IMR-90 (cell line): ENCODE measurements at regions of chr3 and their contacts with region 1.

Region 1: GRCh38 chr3:119293871-119294695 is at the start of gene ARHGAP31:
- DNase-seq: peak; percentile 81
- ATAC-seq: peak; percentile 80
- H3K4me3 ChIP-seq: peak within 1 kb of the TSS; percentile 94
- H3K27ac ChIP-seq: peak within 1 kb of the TSS; percentile 96
- H3K4me1 ChIP-seq: peaks cover 5% of the 10 kb centered on the region
- H3K27me3 ChIP-seq: no peaks in the 10 kb centered on the region
- CTCF ChIP-seq: no peak
- POLR2A ChIP-seq: peak; percentile 26; the same call in 1 of the 2 replicates
- RAD21 ChIP-seq: no peak
- total RNA-seq, gene ARHGAP31: 6.6 and 7.5 TPM in 2 replicates

Region 2: GRCh38 chr3:119098619-119099222 is 195.4 kb before region 1 on chr3:
- CTCF ChIA-PET with region 1: no interaction called
- POLR2A ChIA-PET with region 1: no interaction called
- dilution Hi-C with region 1: no loop called
- in situ Hi-C with region 1: no loop called
- intact Hi-C with region 1: no loop called
- DNase-seq: peak; percentile 40
- ATAC-seq: peak; percentile 42; the same call in 1 of the 2 replicates
- H3K4me3 ChIP-seq: no peak overlapping the region
- H3K27ac ChIP-seq: no peak overlapping the region
- H3K4me1 ChIP-seq: no peaks in the 10 kb centered on the region
- H3K27me3 ChIP-seq: no peaks in the 10 kb centered on the region
- CTCF ChIP-seq: peak; percentile 86
- POLR2A ChIP-seq: no peak
- RAD21 ChIP-seq: peak; percentile 80

Region 3: DNA sequence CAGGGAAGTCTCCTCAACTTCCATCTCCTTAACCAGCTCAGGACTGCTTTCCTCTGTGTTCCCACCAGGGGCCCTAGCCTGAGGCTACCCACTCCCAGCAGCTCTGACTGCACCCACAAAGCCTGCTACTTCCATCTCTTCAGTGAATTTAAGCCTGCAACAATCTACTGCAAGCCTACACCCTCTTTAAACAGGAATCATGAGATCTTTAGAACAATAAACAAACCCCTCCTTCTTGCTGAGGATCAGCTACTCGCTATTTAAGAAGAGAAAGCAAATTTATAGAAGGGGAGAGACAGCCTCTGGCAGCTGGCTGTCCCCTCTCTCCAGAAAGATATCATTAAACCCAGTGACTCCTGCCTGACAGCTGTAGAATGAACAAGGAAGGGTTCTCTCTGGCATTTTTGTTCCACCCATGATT is 52.0 kb after region 1 on chr3:
- CTCF ChIA-PET with region 1: interaction called, 4 read pairs
- POLR2A ChIA-PET with region 1: no interaction called
- dilution Hi-C with region 1: no loop called
- in situ Hi-C with region 1: loop called (anchors 5 kb)
- intact Hi-C with region 1: loop called (anchors 1 kb)
- DNase-seq: peak; percentile 75
- ATAC-seq: peak; percentile 90
- H3K4me3 ChIP-seq: no peak overlapping the region
- H3K27ac ChIP-seq: peak overlapping the region; percentile 89; the same call in 1 of the 2 replicates
- H3K4me1 ChIP-seq: peaks cover 18% of the 10 kb centered on the region
- H3K27me3 ChIP-seq: no peaks in the 10 kb centered on the region
- CTCF ChIP-seq: 0 out of 2 replicates have a peak, but pooled peaks have one; percentile 3
- POLR2A ChIP-seq: no peak
- RAD21 ChIP-seq: no peak

Region 4: GRCh38 chr3:119352849-119353502 is 58.9 kb after region 1 on chr3:
- CTCF ChIA-PET with region 1: interaction called, 4 read pairs
- POLR2A ChIA-PET with region 1: interaction called, 3 read pairs
- dilution Hi-C with region 1: no loop called
- in situ Hi-C with region 1: loop called (anchors 5 kb)
- intact Hi-C with region 1: loop called (anchors 1 kb)
- DNase-seq: peak; percentile 89
- ATAC-seq: peak; percentile 83
- H3K4me3 ChIP-seq: no peak overlapping the region
- H3K27ac ChIP-seq: peak overlapping the region; percentile 94
- H3K4me1 ChIP-seq: peaks cover 19% of the 10 kb centered on the region
- H3K27me3 ChIP-seq: no peaks in the 10 kb centered on the region
- CTCF ChIP-seq: peak; percentile 64
- POLR2A ChIP-seq: no peak
- RAD21 ChIP-seq: peak; percentile 74

Region 5: GRCh38 chr3:119388577-119388976 is 94.5 kb after region 1 on chr3:
- CTCF ChIA-PET with region 1: no interaction called
- POLR2A ChIA-PET with region 1: no interaction called
- dilution Hi-C with region 1: no loop called
- in situ Hi-C with region 1: no loop called
- intact Hi-C with region 1: no loop called
- DNase-seq: no peak
- ATAC-seq: no peak
- H3K4me3 ChIP-seq: no peak overlapping the region
- H3K27ac ChIP-seq: no peak overlapping the region
- H3K4me1 ChIP-seq: no peaks in the 10 kb centered on the region
- H3K27me3 ChIP-seq: no peaks in the 10 kb centered on the region
- CTCF ChIP-seq: no peak
- POLR2A ChIP-seq: no peak
- RAD21 ChIP-seq: no peak

Region 6: GRCh38 chr3:119437691-119438258 is 143.7 kb after region 1 on chr3:
- CTCF ChIA-PET with region 1: no interaction called
- POLR2A ChIA-PET with region 1: no interaction called
- dilution Hi-C with region 1: no loop called
- in situ Hi-C with region 1: no loop called
- intact Hi-C with region 1: loop called (anchors 10 kb)
- DNase-seq: no peak
- ATAC-seq: no peak
- H3K4me3 ChIP-seq: no peak overlapping the region
- H3K27ac ChIP-seq: no peak overlapping the region
- H3K4me1 ChIP-seq: 0 out of 2 replicates have a peak, but pooled peaks cover 2% of the 10 kb centered on the region
- H3K27me3 ChIP-seq: no peaks in the 10 kb centered on the region
- CTCF ChIP-seq: no peak
- POLR2A ChIP-seq: no peak
- RAD21 ChIP-seq: no peak

Region 7: GRCh38 chr3:119463171-119464169 is 169.4 kb after region 1 on chr3 and contains the start of gene TMEM39A:
- CTCF ChIA-PET with region 1: no interaction called
- POLR2A ChIA-PET with region 1: no interaction called
- dilution Hi-C with region 1: no loop called
- in situ Hi-C with region 1: no loop called
- intact Hi-C with region 1: loop called (anchors 2 kb)
- DNase-seq: peak; percentile 98
- ATAC-seq: peak; percentile 96
- H3K4me3 ChIP-seq: peak within 1 kb of the TSS; percentile 75
- H3K27ac ChIP-seq: peak within 1 kb of the TSS; percentile 87
- H3K4me1 ChIP-seq: peaks cover 3% of the 10 kb centered on the region
- H3K27me3 ChIP-seq: no peaks in the 10 kb centered on the region
- CTCF ChIP-seq: 0 out of 2 replicates have a peak, but pooled peaks have one; percentile 18
- POLR2A ChIP-seq: peak; percentile 97
- RAD21 ChIP-seq: no peak
- total RNA-seq, gene TMEM39A: 88.6 and 117 TPM in 2 replicates